HepG2 (cell line): ENCODE measurements at regions of chr1 and their contacts with region 1.

Region 1: GRCh38 chr1:53182111-53182593 is 14.5 kb upstream of the CPT2 start:
- DNase-seq: peak; percentile 78
- ATAC-seq: peak; percentile 45
- H3K4me3 ChIP-seq: peak overlapping the region; percentile 5 to 68 (median 41)
- H3K27ac ChIP-seq: peak overlapping the region; percentile 90
- H3K4me1 ChIP-seq: peaks cover 86% of the 10 kb centered on the region
- H3K27me3 ChIP-seq: 0 out of 5 replicates have a peak, but pooled peaks cover 0 to 4% of the 10 kb centered on the region in 2 experiments
- CTCF ChIP-seq: peak; percentile 87
- EP300 ChIP-seq: no peak
- POLR2A ChIP-seq: no peak
- RAD21 ChIP-seq: peak; percentile 67; the same call in 1 of the 2 replicates

Region 2: GRCh38 chr1:52904927-52905698 is 277.0 kb before region 1 on chr1:
- CTCF ChIA-PET with region 1: no interaction called
- POLR2A ChIA-PET with region 1: no interaction called
- in situ Hi-C with region 1: no loop called
- intact Hi-C with region 1: loop called (anchors 2 kb)
- DNase-seq: no peak
- ATAC-seq: peak; percentile 93
- H3K4me3 ChIP-seq: no peak overlapping the region
- H3K27ac ChIP-seq: no peak overlapping the region
- H3K4me1 ChIP-seq: peaks cover 18% of the 10 kb centered on the region
- H3K27me3 ChIP-seq: no peaks in the 10 kb centered on the region
- CTCF ChIP-seq: peak; percentile 70
- EP300 ChIP-seq: no peak
- POLR2A ChIP-seq: no peak
- RAD21 ChIP-seq: peak; percentile 65

Region 3: GRCh38 chr1:53091841-53092645 is 90.1 kb before region 1 on chr1:
- CTCF ChIA-PET with region 1: no interaction called
- POLR2A ChIA-PET with region 1: interaction called, 8 read pairs
- in situ Hi-C with region 1: no loop called
- intact Hi-C with region 1: loop called (anchors 10 kb)
- DNase-seq: no peak
- ATAC-seq: no peak
- H3K4me3 ChIP-seq: no peak overlapping the region; a peak in 1 of 6 replicates
- H3K27ac ChIP-seq: no peak overlapping the region
- H3K4me1 ChIP-seq: peaks cover 80% of the 10 kb centered on the region
- H3K27me3 ChIP-seq: peaks cover 11 to 26% of the 10 kb centered on the region in 2 experiments; a peak in 4 of 5 replicates
- CTCF ChIP-seq: no peak
- EP300 ChIP-seq: no peak
- POLR2A ChIP-seq: no peak
- RAD21 ChIP-seq: no peak

Region 4: GRCh38 chr1:53121319-53122172 is 60.6 kb before region 1 on chr1:
- CTCF ChIA-PET with region 1: no interaction called
- POLR2A ChIA-PET with region 1: interaction called, 12 read pairs
- in situ Hi-C with region 1: loop called (anchors 5 kb)
- intact Hi-C with region 1: loop called (anchors 5 kb)
- DNase-seq: peak; percentile 83
- ATAC-seq: peak; percentile 83
- H3K4me3 ChIP-seq: peak overlapping the region in 1 of 3 experiments; percentile 58; a peak in 2 of 6 replicates
- H3K27ac ChIP-seq: peak overlapping the region; percentile 55
- H3K4me1 ChIP-seq: peaks cover 84% of the 10 kb centered on the region
- H3K27me3 ChIP-seq: peaks cover 2 to 17% of the 10 kb centered on the region in 2 experiments; a peak in 4 of 5 replicates
- CTCF ChIP-seq: peak; percentile 65
- EP300 ChIP-seq: peak; percentile 27 to 88; a peak in 2 of 4 replicates
- POLR2A ChIP-seq: no peak
- RAD21 ChIP-seq: peak; percentile 32

Region 5: DNA sequence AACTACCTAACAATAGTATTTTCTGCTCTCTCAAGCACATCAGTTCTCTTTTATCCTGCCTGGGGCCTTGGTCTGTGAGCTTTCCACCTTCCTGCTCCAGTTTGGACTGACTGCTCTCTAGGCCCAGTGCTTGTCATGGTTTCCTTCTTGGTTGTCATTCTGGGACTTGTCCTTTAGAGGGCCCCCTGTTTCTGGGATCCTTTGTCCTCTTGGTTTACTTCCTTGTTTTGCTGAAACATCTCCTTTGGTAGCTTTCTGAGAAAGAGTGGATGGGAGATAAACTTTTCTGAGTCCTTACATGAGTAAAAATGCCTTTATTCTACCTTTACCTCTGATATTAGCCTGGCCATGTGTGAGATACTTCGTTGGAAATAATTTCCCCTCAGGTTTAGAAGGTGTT is 44.4 kb before region 1 on chr1:
- CTCF ChIA-PET with region 1: no interaction called
- POLR2A ChIA-PET with region 1: interaction called, 3 read pairs
- in situ Hi-C with region 1: no loop called
- intact Hi-C with region 1: loop called (anchors 2 kb)
- DNase-seq: peak; percentile 41
- ATAC-seq: peak; percentile 31; the same call in 1 of the 3 replicates
- H3K4me3 ChIP-seq: no peak overlapping the region
- H3K27ac ChIP-seq: no peak overlapping the region
- H3K4me1 ChIP-seq: peaks cover 64% of the 10 kb centered on the region
- H3K27me3 ChIP-seq: peaks cover 0 to 2% of the 10 kb centered on the region in 2 experiments; a peak in 2 of 5 replicates
- CTCF ChIP-seq: peak; percentile 58
- EP300 ChIP-seq: no peak
- POLR2A ChIP-seq: no peak
- RAD21 ChIP-seq: 0 out of 2 replicates have a peak, but pooled peaks have one; percentile 16

Region 6: DNA sequence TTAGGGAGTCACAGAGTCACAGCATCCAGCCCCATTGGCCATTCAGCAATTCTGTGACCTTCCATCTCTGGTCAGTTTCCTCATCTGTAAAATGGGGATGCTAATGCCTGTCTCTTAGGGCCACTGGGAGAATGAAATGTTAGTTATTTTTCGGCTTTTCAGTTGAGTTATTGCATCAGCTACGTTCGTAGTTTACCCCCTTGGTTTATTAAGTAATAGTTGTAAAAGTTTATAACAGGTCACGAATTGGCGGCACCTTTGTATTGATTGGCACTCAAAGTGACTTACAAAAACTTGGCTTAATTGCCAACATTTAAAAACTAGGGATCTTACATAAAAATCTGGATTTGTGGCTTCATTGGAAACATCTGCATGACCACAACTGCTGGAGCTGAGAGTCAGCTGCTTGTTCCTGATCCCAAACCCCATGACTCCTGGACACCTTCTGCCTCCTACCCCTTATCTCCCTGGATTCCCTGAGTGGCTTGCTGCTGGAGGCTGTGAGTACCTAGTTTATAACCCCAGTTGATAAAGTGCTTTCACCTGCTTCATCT is 16.7 kb before region 1 on chr1:
- CTCF ChIA-PET with region 1: no interaction called
- POLR2A ChIA-PET with region 1: interaction called, 15 read pairs
- in situ Hi-C with region 1: no loop called
- intact Hi-C with region 1: loop called (anchors 1 kb)
- DNase-seq: no peak
- ATAC-seq: no peak
- H3K4me3 ChIP-seq: no peak overlapping the region
- H3K27ac ChIP-seq: no peak overlapping the region
- H3K4me1 ChIP-seq: peaks cover 49% of the 10 kb centered on the region
- H3K27me3 ChIP-seq: no peaks in the 10 kb centered on the region
- CTCF ChIP-seq: no peak
- EP300 ChIP-seq: no peak
- POLR2A ChIP-seq: no peak
- RAD21 ChIP-seq: no peak